ENCODE measurements at regions of chr4 and their contacts with region 1.

Region 1: GRCh38 chr4:82373816-82374625 is at the start of gene HNRNPD:
- DNase-seq: peak; percentile 98 to 99 (median 98)
- ATAC-seq: peak; percentile 92 to 97 (median 96)
- H3K4me3 ChIP-seq: peak within 1 kb of the TSS; percentile 73 to 99 (median 94)
- H3K27ac ChIP-seq: peak within 1 kb of the TSS; percentile 94 to 100 (median 99)
- H3K4me1 ChIP-seq: peaks cover 12 to 48% (median 34%) of the 10 kb centered on the region in 12 donors
- H3K27me3 ChIP-seq: no peaks in the 10 kb centered on the region
- CTCF ChIP-seq: peak in 1 of 12 donors; percentile 30
- POLR2A ChIP-seq: peak; percentile 3 to 90
- total RNA-seq, gene HNRNPD: 33.8 to 150 (median 122) TPM

Region 2: GRCh38 chr4:82428969-82429727 is 55.1 kb after region 1 on chr4:
- intact Hi-C with region 1: loop called in 9 of 10 experiments (anchors 1 to 5 kb)
- DNase-seq: peak; percentile 93 to 97 (median 93)
- ATAC-seq: peak; percentile 76 to 86 (median 85)
- H3K4me3 ChIP-seq: peak overlapping the region; percentile 63 to 99 (median 90)
- H3K27ac ChIP-seq: peak overlapping the region; percentile 91 to 100 (median 98)
- H3K4me1 ChIP-seq: peaks cover 0 to 60% (median 31%) of the 10 kb centered on the region in 12 donors
- H3K27me3 ChIP-seq: no peaks in the 10 kb centered on the region
- CTCF ChIP-seq: peak; percentile 90 to 100 (median 98)
- POLR2A ChIP-seq: peak in 1 of 2 donors; percentile 69

Region 3: GRCh38 chr4:82890901-82891706 is 517.1 kb after region 1 on chr4 and contains the start of gene SEC31A:
- intact Hi-C with region 1: loop called in 2 of 10 experiments (anchors 5 to 10 kb)
- DNase-seq: peak; percentile 97 to 99 (median 98)
- ATAC-seq: peak; percentile 98 to 99 (median 98)
- H3K4me3 ChIP-seq: peak within 1 kb of the TSS; percentile 69 to 98 (median 82)
- H3K27ac ChIP-seq: peak within 1 kb of the TSS; percentile 85 to 99 (median 96)
- H3K4me1 ChIP-seq: peaks cover 0 to 39% (median 33%) of the 10 kb centered on the region in 12 donors
- H3K27me3 ChIP-seq: no peaks in the 10 kb centered on the region
- CTCF ChIP-seq: peak in 4 of 12 donors; percentile 7 to 35 (median 26)
- POLR2A ChIP-seq: peak in 1 of 2 donors; percentile 88
- total RNA-seq, gene SEC31A: 81.0 to 168 (median 101) TPM